Caco-2 (cell line): ENCODE measurements at regions of chr3 and their contacts with region 1.

Region 1: DNA sequence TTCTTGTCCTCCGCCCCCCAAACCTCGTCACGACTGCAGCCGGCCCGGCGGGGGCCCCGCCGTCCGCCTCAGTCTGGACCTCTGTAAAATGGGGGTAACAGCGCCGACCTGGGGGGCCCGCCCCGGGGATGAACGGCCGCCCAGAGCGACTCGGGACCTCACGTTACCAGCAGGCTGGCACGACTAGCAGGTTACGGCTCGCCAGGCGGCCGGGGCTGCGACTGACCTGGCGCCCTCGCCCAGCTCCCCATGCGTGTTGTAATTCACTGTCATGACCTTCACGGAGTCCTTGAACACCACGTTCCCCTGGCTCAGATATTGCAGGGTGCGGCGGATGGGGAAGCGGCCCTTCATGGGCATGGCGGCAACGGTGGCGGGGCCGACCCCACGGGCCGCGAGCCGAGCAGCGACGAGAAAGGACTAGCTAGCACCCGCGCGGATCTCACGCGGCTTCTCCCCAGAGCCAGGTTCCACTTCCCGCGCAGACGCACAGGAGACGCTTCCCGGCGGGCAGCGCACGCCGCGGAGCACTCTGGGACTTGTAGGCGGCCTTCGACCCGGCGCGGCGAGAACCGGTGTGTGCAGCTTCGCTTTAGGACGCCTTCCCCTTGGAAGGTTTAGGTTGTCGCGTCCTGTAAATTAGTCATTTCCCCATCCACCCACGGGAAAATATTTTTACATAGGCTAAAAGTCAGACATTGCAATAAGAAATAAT is at the start of gene MRPS25:
- DNase-seq: peak; percentile 90
- H3K4me3 ChIP-seq: peak within 1 kb of the TSS; percentile 90
- H3K4me3 Mint-ChIP-seq: peak within 1 kb of the TSS; percentile 92
- H3K27ac Mint-ChIP-seq: peak within 1 kb of the TSS; percentile 96
- H3K4me1 ChIP-seq: peaks cover 17% of the 10 kb centered on the region
- H3K4me1 Mint-ChIP-seq: peaks cover 10% of the 10 kb centered on the region
- H3K27me3 ChIP-seq: no peaks in the 10 kb centered on the region
- H3K27me3 Mint-ChIP-seq: no peaks in the 10 kb centered on the region
- CTCF ChIP-seq: no peak
- total RNA-seq, gene MRPS25: 53.3 and 55.6 TPM in 2 replicates

Region 2: DNA sequence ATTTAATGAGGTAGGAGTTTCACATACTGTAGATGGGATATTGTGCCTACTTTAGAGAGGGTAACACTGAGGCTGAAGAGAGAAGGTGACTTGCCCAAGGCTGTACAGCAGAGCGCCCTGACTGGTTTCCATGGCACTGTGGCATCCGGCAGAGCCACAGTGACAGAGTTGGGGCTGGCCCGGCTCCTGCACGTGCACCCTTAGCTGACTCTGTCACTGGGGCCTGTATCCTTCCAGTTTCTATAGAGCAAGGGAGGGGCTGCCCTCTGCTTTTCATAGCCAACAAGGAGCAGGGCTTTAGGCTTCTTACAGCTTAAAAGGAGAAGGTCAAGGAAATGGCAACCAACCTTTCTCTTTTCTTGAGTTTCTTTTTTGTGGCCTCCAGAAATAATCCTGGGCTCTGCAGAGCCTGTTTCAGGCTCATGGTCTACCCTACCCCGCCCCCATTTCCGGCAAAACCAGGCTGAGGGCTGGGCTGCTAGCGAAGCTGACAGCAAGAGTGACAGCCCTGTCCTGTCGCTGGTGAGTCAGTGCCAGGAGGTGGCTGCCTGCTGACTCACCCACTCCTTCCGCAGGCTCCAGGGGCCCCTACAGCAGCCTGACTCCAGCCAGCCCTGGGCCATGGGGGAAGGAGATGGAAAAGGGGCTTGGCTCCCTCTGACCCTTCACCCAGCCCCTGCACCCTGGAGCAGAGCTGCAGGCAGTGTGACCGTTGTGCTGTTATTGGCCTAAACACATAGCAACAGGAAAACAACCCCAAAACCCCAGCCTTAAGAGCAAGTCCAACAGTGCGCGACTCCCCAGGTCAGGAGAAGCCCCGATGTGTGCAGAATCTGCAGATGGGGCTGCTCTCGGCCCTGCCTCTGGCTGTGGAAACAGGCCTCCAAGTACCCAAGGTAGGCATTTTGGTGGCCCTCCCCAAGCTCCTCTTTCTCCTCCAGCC is 632.8 kb before region 1 on chr3:
- CTCF ChIA-PET with region 1: no interaction called
- POLR2A ChIA-PET with region 1: no interaction called
- intact Hi-C with region 1: no loop called
- DNase-seq: peak; percentile 82 to 88
- H3K4me3 ChIP-seq: no peak overlapping the region
- H3K4me3 Mint-ChIP-seq: no peak overlapping the region
- H3K27ac Mint-ChIP-seq: peak overlapping the region; percentile 90
- H3K4me1 ChIP-seq: peaks cover 18% of the 10 kb centered on the region
- H3K4me1 Mint-ChIP-seq: peaks cover 19% of the 10 kb centered on the region
- H3K27me3 ChIP-seq: no peaks in the 10 kb centered on the region
- H3K27me3 Mint-ChIP-seq: no peaks in the 10 kb centered on the region
- CTCF ChIP-seq: no peak

Region 3: DNA sequence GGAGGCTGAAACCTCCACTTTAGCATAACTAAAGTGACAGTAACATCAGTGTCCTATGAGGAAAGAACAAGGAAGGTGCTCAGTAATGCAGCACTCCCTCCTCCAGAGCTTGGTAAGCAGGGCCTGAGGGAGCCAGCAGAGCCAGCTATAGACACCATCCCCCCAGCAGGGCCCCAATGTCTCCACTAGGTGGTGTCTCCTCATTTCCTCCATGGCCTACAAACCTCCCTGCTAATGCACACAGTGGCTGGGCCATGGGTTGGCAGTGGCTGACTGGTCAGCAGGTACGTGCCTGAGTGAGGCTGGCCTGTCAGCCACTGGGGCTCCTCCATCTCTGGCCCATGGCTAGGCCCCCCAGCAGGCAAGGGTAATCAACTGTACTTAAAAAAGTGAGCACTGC is 13.5 kb before region 1 on chr3:
- CTCF ChIA-PET with region 1: interaction called, 10 read pairs
- POLR2A ChIA-PET with region 1: interaction called, 3 read pairs
- intact Hi-C with region 1: no loop called
- DNase-seq: peak; percentile 62 to 69
- H3K4me3 ChIP-seq: no peak overlapping the region
- H3K4me3 Mint-ChIP-seq: no peak overlapping the region
- H3K27ac Mint-ChIP-seq: no peak overlapping the region
- H3K4me1 ChIP-seq: no peaks in the 10 kb centered on the region
- H3K4me1 Mint-ChIP-seq: no peaks in the 10 kb centered on the region
- H3K27me3 ChIP-seq: no peaks in the 10 kb centered on the region
- H3K27me3 Mint-ChIP-seq: no peaks in the 10 kb centered on the region
- CTCF ChIP-seq: peak; percentile 70 to 76

Region 4: DNA sequence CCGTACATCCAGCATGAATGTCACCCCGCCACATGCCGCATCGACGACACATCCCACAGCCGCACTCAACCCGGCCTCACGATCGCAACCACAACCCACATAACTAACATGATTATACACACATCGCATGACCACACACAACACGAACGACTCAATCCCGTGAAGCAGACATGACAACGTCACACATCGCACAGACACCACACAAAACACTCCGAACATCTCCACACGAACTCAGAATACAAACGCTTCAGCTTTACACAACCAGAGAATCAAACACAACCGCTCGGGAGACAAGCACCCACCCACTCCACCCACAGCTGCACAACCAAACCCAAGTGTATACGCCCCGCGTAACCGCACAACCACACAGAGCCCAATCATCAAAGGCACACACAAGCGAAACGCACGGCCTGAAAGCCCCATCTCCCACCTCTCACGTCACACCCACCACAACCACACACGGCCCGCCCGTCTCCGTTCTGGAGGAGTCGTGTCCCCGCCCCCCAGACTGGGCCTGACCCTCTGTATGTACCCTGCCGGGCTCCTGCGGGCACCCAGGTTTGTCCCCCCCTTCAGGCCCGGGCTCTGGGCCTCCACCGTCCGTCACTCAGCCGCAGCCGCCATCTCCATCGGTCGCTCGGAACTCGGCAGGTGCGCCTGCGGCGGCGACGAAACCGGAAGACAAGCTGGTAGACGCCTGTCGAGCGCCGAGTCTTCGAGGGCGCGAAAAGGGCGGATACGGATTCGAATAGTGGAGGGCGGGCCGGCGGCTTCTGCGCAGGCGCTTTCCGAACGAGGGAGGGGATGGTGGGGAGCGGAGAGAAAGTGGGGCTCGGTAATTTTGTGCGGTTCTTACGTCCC is 33.7 kb after region 1 on chr3 and contains the start of gene RBSN:
- CTCF ChIA-PET with region 1: no interaction called
- POLR2A ChIA-PET with region 1: interaction called, 4 read pairs
- intact Hi-C with region 1: loop called (anchors 1 kb)
- DNase-seq: peak; percentile 94
- H3K4me3 ChIP-seq: peak within 1 kb of the TSS; percentile 85
- H3K4me3 Mint-ChIP-seq: peak within 1 kb of the TSS; percentile 100
- H3K27ac Mint-ChIP-seq: peak within 1 kb of the TSS; percentile 98
- H3K4me1 ChIP-seq: peaks cover 7% of the 10 kb centered on the region; the same call in 1 of the 2 replicates
- H3K4me1 Mint-ChIP-seq: peaks cover 16% of the 10 kb centered on the region
- H3K27me3 ChIP-seq: no peaks in the 10 kb centered on the region
- H3K27me3 Mint-ChIP-seq: no peaks in the 10 kb centered on the region
- CTCF ChIP-seq: no peak
- total RNA-seq, gene RBSN: 18.5 and 19.7 TPM in 2 replicates